PC-9 (cell line): ENCODE measurements at regions of chr4 and their contacts with region 1.

Region 1: GRCh38 chr4:15805583-15806517 is 27.7 kb downstream of the CD38 start:
- DNase-seq: peak; percentile 28 to 59
- H3K4me3 ChIP-seq: no peak overlapping the region
- H3K27ac ChIP-seq: no peak overlapping the region
- H3K4me1 ChIP-seq: no peaks in the 10 kb centered on the region
- H3K27me3 ChIP-seq: no peaks in the 10 kb centered on the region
- CTCF ChIP-seq: peak; percentile 78

Region 2: GRCh38 chr4:15729910-15730533 is 75.8 kb before region 1 on chr4:
- CTCF ChIA-PET with region 1: no interaction called
- POLR2A ChIA-PET with region 1: no interaction called
- intact Hi-C with region 1: loop called (anchors 1 kb)
- DNase-seq: peak; percentile 8 to 54
- H3K4me3 ChIP-seq: no peak overlapping the region
- H3K27ac ChIP-seq: no peak overlapping the region
- H3K4me1 ChIP-seq: no peaks in the 10 kb centered on the region
- H3K27me3 ChIP-seq: no peaks in the 10 kb centered on the region
- CTCF ChIP-seq: peak; percentile 86

Region 3: GRCh38 chr4:15956179-15956850 is 150.5 kb after region 1 on chr4:
- CTCF ChIA-PET with region 1: interaction called, 12 read pairs
- POLR2A ChIA-PET with region 1: no interaction called
- intact Hi-C with region 1: loop called (anchors 1 kb)
- DNase-seq: peak; percentile 66 to 73
- H3K4me3 ChIP-seq: no peak overlapping the region
- H3K27ac ChIP-seq: no peak overlapping the region
- H3K4me1 ChIP-seq: peaks cover 5% of the 10 kb centered on the region; the same call in 1 of the 2 replicates
- H3K27me3 ChIP-seq: no peaks in the 10 kb centered on the region
- CTCF ChIP-seq: peak; percentile 93

Region 4: GRCh38 chr4:16026160-16026761 is 220.4 kb after region 1 on chr4:
- CTCF ChIA-PET with region 1: no interaction called
- POLR2A ChIA-PET with region 1: no interaction called
- intact Hi-C with region 1: loop called (anchors 5 kb)
- DNase-seq: peak in 1 of 2 experiments; percentile 6
- H3K4me3 ChIP-seq: no peak overlapping the region
- H3K27ac ChIP-seq: no peak overlapping the region
- H3K4me1 ChIP-seq: no peaks in the 10 kb centered on the region
- H3K27me3 ChIP-seq: no peaks in the 10 kb centered on the region
- CTCF ChIP-seq: peak; percentile 84

Region 5: DNA sequence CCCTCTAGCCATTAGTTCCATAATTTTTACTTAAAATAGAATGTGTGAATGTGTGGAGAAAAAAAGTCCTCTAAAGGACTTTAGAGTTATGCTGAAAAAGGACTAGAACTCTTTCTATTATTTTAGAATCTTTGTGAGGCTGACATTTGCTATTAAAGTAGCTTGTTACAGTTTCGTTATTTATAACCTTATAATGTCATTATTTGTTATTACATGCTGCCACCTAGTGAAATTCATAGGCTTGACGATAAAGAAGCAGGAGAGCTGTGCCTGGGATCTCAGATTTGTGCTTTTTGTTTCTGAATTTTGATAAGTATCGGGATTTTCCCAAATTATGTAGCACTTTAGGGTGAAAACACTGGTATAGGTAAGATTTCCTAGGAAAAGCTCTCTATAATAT is 458.9 kb after region 1 on chr4:
- CTCF ChIA-PET with region 1: interaction called, 6 read pairs
- POLR2A ChIA-PET with region 1: no interaction called
- intact Hi-C with region 1: loop called (anchors 1 kb)
- DNase-seq: no peak
- H3K4me3 ChIP-seq: no peak overlapping the region
- H3K27ac ChIP-seq: no peak overlapping the region
- H3K4me1 ChIP-seq: no peaks in the 10 kb centered on the region
- H3K27me3 ChIP-seq: no peaks in the 10 kb centered on the region
- CTCF ChIP-seq: peak; percentile 53